ENCODE measurements at regions of chr9 and their contacts with region 1.

Region 1: GRCh38 chr9:75855509-75855908 is 35.0 kb upstream of the PCSK5 start:
- DNase-seq: peak; percentile 18
- ATAC-seq: peak; percentile 63
- H3K4me3 ChIP-seq: no peak overlapping the region
- H3K27ac ChIP-seq: no peak overlapping the region
- H3K4me1 ChIP-seq: no peaks in the 10 kb centered on the region
- H3K27me3 ChIP-seq: 0 out of 2 replicates have a peak, but pooled peaks cover 4% of the 10 kb centered on the region
- CTCF ChIP-seq: peak; percentile 38 to 59 (median 49); a peak in 5 of 6 replicates
- POLR2A ChIP-seq: no peak
- RAD21 ChIP-seq: peak; percentile 62

Region 2: DNA sequence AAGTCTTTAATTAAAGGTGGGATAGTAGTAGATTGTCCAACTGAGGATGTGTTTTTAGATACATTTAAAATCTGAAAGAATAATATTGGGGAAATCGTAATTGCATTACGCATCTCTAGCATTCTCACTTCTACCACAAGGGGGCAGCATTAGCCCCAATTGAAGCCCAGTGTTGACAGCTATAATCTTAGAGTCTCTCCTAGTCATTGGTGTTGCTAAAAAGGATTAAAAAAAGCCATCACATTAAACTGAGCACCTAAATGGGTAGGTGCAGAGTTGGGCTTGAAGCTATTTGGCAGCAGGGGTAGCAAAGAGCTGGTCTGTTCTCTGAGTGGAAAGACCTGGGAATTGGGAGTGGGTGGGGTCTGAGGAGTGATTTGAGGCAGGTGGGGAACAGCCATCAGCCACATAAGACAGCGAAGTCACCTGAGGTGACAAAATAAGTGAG is 590.0 kb before region 1 on chr9:
- CTCF ChIA-PET with region 1: interaction called, 5 read pairs
- POLR2A ChIA-PET with region 1: no interaction called
- RAD21 ChIA-PET with region 1: no interaction called
- intact Hi-C with region 1: loop called (anchors 5 kb)
- DNase-seq: peak; percentile 15
- ATAC-seq: peak; percentile 87
- H3K4me3 ChIP-seq: no peak overlapping the region
- H3K27ac ChIP-seq: no peak overlapping the region
- H3K4me1 ChIP-seq: no peaks in the 10 kb centered on the region
- H3K27me3 ChIP-seq: no peaks in the 10 kb centered on the region
- CTCF ChIP-seq: peak; percentile 61 to 96 (median 83)
- POLR2A ChIP-seq: no peak
- RAD21 ChIP-seq: peak; percentile 72

Region 3: DNA sequence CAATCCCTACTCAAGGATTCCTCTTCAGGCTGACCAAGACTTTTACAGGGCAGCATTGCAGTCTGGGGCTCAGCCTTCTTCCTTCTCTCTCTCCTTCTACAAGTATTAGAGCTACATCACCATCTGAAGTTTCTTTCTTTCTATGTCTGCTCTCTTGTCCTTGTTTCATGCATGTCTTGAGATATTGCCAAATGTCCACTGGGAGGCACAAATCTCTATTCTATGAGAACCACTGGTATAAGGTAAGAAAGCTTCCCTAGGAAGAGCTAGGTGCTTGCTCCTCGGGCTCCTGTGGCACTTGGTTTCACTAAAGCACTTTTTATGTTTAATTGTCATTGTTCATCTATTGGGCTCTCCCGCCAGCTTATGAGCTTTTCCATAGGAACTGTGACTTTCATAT is 254.2 kb before region 1 on chr9:
- CTCF ChIA-PET with region 1: interaction called, 13 read pairs
- POLR2A ChIA-PET with region 1: no interaction called
- RAD21 ChIA-PET with region 1: no interaction called
- intact Hi-C with region 1: no loop called
- DNase-seq: no peak
- ATAC-seq: peak; percentile 42; the same call in 1 of the 2 replicates
- H3K4me3 ChIP-seq: no peak overlapping the region
- H3K27ac ChIP-seq: no peak overlapping the region
- H3K4me1 ChIP-seq: no peaks in the 10 kb centered on the region
- H3K27me3 ChIP-seq: peaks cover 18% of the 10 kb centered on the region
- CTCF ChIP-seq: peak in 2 of 3 experiments; percentile 8 to 19; a peak in 1 of 6 replicates
- POLR2A ChIP-seq: no peak
- RAD21 ChIP-seq: peak; percentile 28; the same call in 1 of the 2 replicates

Measured in HCT116 (cell line).